ENCODE measurements at regions of chr14 and their contacts with region 1.

Region 1: DNA sequence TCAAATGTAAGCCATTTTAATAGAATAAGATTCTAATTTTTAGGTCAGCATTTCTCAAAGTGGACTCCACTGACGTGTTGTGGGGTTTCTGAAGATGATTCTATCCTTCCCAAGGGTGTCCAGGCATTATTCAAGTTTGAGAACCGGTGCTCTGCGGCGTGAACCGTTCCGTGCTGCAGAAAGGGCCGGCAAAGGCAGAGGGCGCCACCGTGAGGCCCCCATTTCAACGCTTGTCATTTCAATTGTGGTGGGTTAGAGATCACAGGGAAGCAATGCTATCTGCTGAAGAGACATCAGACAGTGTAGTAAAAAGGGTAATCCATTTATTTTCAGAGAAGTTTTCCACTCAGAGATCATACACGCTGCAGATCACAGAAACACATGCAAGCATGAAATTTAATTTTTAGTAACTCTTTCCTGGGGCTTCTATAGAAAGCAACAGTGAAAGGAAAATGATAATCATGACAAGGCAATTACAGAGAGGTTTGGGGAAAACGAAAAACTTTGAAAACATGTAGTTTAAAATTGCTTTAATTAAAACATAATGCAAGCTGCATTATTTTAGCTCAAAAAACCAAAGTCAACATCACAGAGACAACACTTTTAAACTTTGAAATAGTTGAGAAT is 201.7 kb downstream of the EXOC5 start:
- DNase-seq: peak; percentile 71
- ATAC-seq: peak; percentile 69
- H3K4me3 Mint-ChIP-seq: no peak overlapping the region
- H3K27ac Mint-ChIP-seq: no peak overlapping the region
- H3K4me1 Mint-ChIP-seq: no peaks in the 10 kb centered on the region
- H3K27me3 Mint-ChIP-seq: peaks cover 25% of the 10 kb centered on the region

Region 2: GRCh38 chr14:56555921-56556570 is 511.0 kb before region 1 on chr14:
- CTCF ChIA-PET with region 1: no interaction called
- POLR2A ChIA-PET with region 1: no interaction called
- intact Hi-C with region 1: loop called in 1 of 2 experiments (anchors 10 kb)
- DNase-seq: no peak
- ATAC-seq: no peak
- H3K4me3 Mint-ChIP-seq: no peak overlapping the region
- H3K27ac Mint-ChIP-seq: no peak overlapping the region
- H3K4me1 Mint-ChIP-seq: no peaks in the 10 kb centered on the region
- H3K27me3 Mint-ChIP-seq: peaks cover 17% of the 10 kb centered on the region

Region 3: DNA sequence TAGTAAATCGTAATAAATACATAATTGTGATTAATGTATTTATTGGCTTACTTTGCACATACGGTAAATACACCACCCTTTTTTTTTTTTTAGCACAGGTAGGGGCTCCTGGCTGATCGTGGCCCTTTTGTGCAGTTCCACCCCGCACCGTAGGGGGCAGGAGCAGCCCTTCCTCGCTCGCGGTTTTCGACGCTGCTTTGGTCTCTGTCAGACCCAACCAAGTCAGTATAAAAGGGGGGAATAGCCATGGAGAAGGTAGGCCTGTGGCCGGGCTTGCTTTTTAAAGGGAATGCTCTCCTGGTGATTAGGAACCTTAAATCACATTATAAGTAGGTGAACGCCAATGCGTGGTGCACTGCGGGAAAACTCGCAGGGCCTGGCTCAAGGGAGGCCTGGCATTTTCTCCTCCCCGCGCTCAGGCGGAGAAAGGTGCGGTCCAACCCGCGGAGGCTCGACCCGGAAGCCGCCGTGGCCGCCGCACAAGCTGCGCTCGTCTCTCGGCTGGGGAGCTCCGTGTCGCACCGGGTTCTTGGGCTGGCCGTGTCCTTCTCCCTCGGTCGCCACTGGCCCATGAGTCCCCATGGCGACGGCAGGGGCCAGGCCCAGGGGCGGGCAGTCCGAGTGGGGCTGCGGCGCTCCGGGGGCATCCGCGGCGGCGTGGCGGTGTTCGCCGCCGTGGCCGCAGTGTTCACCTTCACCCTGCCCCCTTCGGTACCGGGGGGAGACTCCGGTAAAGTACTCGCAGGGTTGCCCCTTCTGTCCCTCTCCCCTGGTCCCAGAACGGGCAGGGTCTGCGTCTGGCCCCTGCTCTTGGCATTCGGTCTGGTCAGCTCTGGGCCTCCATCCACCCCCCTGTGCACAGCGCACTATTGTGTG is 487.4 kb before region 1 on chr14 and contains the start of gene TMEM260:
- CTCF ChIA-PET with region 1: no interaction called
- POLR2A ChIA-PET with region 1: no interaction called
- intact Hi-C with region 1: loop called in 1 of 2 experiments (anchors 10 kb)
- DNase-seq: peak; percentile 93
- ATAC-seq: peak; percentile 89
- H3K4me3 Mint-ChIP-seq: peak within 1 kb of the TSS; percentile 82
- H3K27ac Mint-ChIP-seq: peak within 1 kb of the TSS; percentile 95
- H3K4me1 Mint-ChIP-seq: peaks cover 33% of the 10 kb centered on the region
- H3K27me3 Mint-ChIP-seq: no peaks in the 10 kb centered on the region
- total RNA-seq, gene TMEM260: 15.2 to 17.9 TPM

Region 4: DNA sequence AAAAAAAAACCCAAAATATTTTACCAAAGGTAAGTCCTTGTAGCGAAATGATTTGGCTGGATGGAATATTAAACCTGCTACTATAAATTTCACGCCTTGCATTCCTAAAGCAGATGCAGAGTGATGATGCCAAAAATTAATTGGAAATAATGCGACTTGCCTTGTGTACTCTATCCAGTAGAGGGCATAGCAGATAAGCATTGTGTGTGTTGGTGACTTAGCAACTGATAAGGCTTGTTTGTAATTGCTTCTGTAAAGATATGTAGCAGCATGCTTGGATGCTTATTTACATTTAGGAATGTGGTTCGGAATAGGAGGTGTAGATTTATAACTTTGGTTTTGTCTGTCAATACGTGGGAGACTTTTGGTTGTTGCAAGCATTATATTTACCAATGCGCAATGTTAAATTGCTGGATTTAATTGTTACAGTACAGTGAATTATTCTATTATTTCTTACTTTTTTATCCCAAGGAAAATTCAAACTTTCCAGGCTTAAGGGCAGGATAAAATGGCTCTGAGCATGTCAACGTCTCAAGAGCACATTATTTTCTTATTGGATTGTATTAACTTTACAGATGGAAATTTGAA is 406.9 kb before region 1 on chr14:
- CTCF ChIA-PET with region 1: no interaction called
- POLR2A ChIA-PET with region 1: no interaction called
- intact Hi-C with region 1: loop called (anchors 5 kb)
- DNase-seq: no peak
- ATAC-seq: no peak
- H3K4me3 Mint-ChIP-seq: no peak overlapping the region
- H3K27ac Mint-ChIP-seq: no peak overlapping the region
- H3K4me1 Mint-ChIP-seq: no peaks in the 10 kb centered on the region
- H3K27me3 Mint-ChIP-seq: peaks cover 2% of the 10 kb centered on the region

Region 5: DNA sequence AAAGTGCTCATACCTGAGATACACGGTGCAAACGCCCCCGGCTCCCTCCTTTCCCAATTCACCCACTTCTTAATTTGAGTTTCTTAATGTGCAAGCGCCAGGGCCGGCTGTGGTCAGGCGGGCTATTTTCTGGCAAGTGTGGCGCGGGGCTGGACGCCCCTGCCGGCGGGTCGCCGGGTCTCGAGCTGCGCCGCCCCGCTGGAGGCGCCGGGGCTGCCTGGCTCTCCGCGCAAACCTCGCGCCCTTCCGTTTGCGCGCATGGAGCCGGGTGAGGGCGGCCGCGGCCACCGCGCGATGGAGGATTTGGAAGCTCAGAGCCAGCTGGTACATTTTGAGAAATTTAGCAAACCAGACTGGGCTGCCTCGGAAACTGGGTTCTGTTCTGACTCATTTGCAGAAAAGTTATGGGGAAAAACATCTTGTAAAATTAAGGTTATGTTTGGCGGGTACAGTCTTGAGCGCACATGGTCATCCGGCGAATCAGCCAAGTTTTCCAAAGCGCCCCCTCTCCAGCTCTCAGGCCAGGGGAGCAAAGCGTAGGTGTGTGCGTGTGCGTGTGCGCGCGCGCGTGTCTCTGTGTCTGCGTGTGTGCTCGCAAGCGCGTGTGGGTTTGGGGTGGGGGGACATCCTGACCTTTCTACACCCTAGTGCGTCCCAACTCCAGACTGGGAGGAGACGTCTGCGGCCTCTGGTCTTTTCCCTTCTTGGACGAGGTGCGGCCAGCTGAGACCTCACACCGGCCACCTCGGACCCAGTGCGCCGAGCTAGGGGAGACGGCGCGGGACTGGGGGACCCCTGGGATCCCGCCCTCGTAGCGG is 250.2 kb before region 1 on chr14:
- CTCF ChIA-PET with region 1: no interaction called
- POLR2A ChIA-PET with region 1: no interaction called
- intact Hi-C with region 1: loop called in 1 of 2 experiments (anchors 10 kb)
- DNase-seq: no peak
- ATAC-seq: no peak
- H3K4me3 Mint-ChIP-seq: no peak overlapping the region
- H3K27ac Mint-ChIP-seq: no peak overlapping the region
- H3K4me1 Mint-ChIP-seq: no peaks in the 10 kb centered on the region
- H3K27me3 Mint-ChIP-seq: peaks cover 58% of the 10 kb centered on the region

Region 6: GRCh38 chr14:57182760-57183503 is 115.9 kb after region 1 on chr14:
- CTCF ChIA-PET with region 1: no interaction called
- POLR2A ChIA-PET with region 1: no interaction called
- intact Hi-C with region 1: no loop called
- DNase-seq: peak; percentile 29
- ATAC-seq: no peak
- H3K4me3 Mint-ChIP-seq: no peak overlapping the region
- H3K27ac Mint-ChIP-seq: no peak overlapping the region
- H3K4me1 Mint-ChIP-seq: no peaks in the 10 kb centered on the region
- H3K27me3 Mint-ChIP-seq: peaks cover 15% of the 10 kb centered on the region

Region 7: DNA sequence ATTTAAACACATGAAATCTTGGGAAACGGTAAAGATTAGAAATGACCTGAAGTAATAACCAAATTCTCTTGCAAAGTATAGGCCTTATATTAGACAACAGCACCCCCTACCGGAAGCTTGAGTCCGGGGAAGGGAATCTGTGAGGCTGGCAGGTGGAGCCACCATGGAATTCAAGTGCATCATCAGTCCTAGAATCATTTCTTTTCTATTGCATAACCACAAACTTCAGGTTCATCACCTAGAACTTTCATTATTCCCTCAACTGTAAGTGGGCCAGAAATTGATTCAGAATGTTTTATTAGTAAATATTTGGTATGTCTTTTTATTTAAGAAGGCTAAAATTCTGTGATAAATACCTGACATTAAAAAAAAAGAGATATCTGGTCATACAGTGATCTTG is 250.3 kb after region 1 on chr14:
- CTCF ChIA-PET with region 1: no interaction called
- POLR2A ChIA-PET with region 1: no interaction called
- intact Hi-C with region 1: loop called (anchors 5 kb)
- DNase-seq: peak; percentile 83
- ATAC-seq: peak; percentile 49
- H3K4me3 Mint-ChIP-seq: no peak overlapping the region
- H3K27ac Mint-ChIP-seq: no peak overlapping the region
- H3K4me1 Mint-ChIP-seq: peaks cover 6% of the 10 kb centered on the region
- H3K27me3 Mint-ChIP-seq: no peaks in the 10 kb centered on the region